ENCODE measurements at regions of chr19 and their contacts with region 1.

Region 1: DNA sequence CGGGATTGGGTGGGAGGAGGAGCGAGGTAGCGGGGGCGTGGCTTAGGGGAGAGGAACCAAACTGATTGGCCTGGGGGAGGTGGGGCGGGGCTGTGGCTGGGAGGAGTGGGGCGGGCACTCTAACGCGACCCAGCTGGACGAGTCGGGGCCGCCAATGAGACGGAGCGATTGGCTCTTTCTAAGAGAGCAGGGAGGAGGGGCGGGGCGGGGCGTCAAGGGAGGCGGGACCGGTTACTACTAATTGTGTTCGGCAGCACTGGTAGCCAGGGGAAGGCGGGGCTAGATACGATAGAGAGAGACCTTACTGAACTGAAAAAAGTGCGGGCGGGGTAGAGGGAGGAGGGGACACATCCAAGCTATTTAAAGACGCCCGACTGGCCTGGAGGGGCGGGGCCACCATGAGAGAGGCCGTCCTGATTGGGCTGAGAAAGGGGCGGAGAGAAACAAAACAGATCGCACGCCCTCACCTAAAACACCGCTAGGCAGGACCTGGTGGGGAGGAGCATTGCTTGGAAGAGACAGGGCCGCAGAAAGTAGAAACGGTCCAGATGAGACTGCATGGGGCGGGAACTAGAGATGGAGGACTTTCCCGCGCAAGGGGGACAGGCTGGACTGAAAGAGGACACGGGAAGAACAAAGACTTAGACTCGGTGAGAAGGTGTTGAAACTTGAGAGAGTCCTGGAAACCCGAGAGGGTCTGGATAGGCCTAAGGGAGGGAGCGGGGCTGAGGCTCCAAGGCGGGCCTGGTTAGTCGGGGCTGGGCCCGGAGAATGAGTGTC is at the start of gene KCNC3:
- DNase-seq: peak; percentile 98
- H3K4me3 Mint-ChIP-seq: peak within 1 kb of the TSS; percentile 82
- H3K27ac Mint-ChIP-seq: peak within 1 kb of the TSS; percentile 83
- H3K4me1 Mint-ChIP-seq: peaks cover 65% of the 10 kb centered on the region
- H3K27me3 Mint-ChIP-seq: peaks cover 45% of the 10 kb centered on the region
- total RNA-seq, gene KCNC3: 2.0 to 2.4 TPM

Region 2: DNA sequence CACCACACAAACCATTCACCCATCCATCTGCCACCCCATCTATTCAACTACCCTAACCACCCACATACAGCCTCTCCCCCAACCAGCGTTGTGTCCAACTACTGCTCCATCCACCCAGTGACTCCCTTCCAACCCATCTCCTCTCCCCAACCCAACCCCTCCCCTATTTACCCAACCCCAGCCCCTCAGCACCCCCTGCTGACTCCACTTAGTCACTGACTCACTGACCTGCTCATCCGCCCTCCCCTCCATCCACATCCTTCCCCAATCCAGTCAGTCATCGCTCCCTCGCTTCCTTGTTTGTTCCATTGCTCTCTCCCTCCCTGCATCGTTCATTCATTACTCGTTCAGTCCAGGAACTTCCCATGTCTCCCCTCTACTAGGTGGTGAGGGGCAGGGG is 39.3 kb before region 1 on chr19:
- CTCF ChIA-PET with region 1: no interaction called
- intact Hi-C with region 1: no loop called
- DNase-seq: no peak
- H3K4me3 Mint-ChIP-seq: no peak overlapping the region
- H3K27ac Mint-ChIP-seq: no peak overlapping the region
- H3K4me1 Mint-ChIP-seq: no peaks in the 10 kb centered on the region
- H3K27me3 Mint-ChIP-seq: peaks cover 38% of the 10 kb centered on the region

Region 3: GRCh38 chr19:50341091-50341564 is 11.8 kb after region 1 on chr19:
- CTCF ChIA-PET with region 1: interaction called, 4 read pairs
- intact Hi-C with region 1: loop called (anchors 2 kb)
- DNase-seq: no peak
- H3K4me3 Mint-ChIP-seq: no peak overlapping the region
- H3K27ac Mint-ChIP-seq: no peak overlapping the region
- H3K4me1 Mint-ChIP-seq: peaks cover 12% of the 10 kb centered on the region
- H3K27me3 Mint-ChIP-seq: no peaks in the 10 kb centered on the region

Region 4: DNA sequence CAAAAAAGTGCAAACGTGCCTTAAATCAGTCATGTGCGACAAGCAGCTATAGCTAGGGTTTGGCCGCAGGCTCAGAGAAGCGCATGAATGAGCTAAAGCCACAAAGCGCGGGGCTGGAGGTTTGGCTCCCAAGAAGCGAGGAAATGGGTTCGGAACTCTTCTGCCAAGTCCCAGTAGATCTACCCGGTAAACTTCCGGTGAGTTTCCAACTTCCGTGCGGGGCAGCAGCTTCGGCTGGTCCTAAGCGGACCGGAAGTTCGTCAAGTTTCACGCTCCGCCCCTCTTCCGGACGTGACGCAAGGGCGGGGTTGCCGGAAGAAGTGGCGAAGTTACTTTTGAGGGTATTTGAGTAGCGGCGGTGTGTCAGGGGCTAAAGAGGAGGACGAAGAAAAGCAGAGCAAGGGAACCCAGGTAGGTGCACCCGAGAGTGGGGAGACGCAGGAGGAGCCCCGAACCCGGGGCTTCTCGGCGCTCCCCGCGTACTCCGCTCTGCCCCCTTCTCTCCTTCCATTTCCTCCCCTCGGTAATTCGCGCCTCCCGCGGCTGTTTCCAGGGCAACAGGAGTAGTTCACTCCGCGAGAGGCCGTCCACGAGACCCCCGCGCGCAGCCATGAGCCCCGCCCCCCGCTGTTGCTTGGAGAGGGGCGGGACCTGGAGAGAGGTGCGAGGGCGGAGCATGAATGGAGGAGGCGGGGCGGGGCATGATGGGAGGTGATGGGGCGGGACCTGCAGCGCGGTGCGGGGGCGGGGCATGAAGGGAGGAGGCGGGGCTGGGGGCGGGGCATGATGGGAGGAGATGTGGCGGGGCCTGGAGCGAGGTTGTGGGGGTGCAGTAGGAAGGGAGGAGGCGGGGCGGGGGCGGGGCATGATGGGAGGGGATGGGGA is 47.1 kb after region 1 on chr19 and contains the start of gene NR1H2:
- CTCF ChIA-PET with region 1: no interaction called
- intact Hi-C with region 1: loop called (anchors 1 kb)
- DNase-seq: peak; percentile 96
- H3K4me3 Mint-ChIP-seq: peak within 1 kb of the TSS; percentile 100
- H3K27ac Mint-ChIP-seq: peak within 1 kb of the TSS; percentile 100
- H3K4me1 Mint-ChIP-seq: peaks cover 19% of the 10 kb centered on the region
- H3K27me3 Mint-ChIP-seq: no peaks in the 10 kb centered on the region
- total RNA-seq, gene NR1H2: 47.2 to 49.3 TPM

Region 5: DNA sequence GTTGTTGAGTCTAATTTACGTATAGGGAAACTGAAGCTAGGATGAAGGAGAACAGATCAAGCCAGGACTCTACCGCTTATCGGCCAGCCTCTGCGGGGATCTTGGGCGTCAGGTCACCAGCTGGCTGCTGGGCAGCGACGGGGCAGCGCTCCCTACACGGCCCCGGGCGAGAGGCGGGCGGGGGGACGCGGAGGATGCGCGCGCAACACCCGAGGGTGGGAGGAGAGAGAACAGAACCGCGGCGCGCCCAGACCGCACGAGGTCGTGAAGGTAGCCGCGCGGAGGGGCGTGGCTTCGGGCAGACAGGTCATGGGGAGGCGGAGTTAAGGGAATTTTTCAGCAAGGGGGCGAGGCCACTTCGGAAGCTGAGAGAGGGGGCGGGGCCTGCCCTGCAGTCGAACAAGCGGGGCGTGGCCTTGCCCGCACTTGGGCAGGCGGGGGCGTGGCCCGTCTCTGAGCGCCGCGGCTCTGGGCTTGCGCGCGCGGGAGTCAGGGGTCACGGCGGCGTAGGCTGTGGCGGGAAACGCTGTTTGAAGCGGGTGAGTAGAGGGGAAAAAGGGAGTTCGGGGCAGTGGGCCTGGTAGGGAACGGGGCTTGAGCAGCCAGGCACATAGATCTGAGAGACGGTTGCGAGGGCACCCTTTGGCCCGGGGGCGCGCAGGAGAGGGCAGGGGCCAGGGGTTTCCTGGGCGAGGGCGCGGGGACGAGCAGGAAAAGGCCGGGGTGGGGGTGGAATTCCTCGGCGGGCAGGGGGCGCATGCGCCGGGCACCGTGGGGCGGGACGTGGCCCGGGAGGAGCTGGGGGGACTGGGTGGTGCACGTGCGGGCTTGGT is 54.7 kb after region 1 on chr19 and contains the start of gene POLD1:
- CTCF ChIA-PET with region 1: no interaction called
- intact Hi-C with region 1: loop called (anchors 1 kb)
- DNase-seq: peak; percentile 99
- H3K4me3 Mint-ChIP-seq: peak within 1 kb of the TSS; percentile 98
- H3K27ac Mint-ChIP-seq: peak within 1 kb of the TSS; percentile 95
- H3K4me1 Mint-ChIP-seq: peaks cover 36% of the 10 kb centered on the region
- H3K27me3 Mint-ChIP-seq: no peaks in the 10 kb centered on the region
- total RNA-seq, gene POLD1: 221 to 224 TPM

Region 6: DNA sequence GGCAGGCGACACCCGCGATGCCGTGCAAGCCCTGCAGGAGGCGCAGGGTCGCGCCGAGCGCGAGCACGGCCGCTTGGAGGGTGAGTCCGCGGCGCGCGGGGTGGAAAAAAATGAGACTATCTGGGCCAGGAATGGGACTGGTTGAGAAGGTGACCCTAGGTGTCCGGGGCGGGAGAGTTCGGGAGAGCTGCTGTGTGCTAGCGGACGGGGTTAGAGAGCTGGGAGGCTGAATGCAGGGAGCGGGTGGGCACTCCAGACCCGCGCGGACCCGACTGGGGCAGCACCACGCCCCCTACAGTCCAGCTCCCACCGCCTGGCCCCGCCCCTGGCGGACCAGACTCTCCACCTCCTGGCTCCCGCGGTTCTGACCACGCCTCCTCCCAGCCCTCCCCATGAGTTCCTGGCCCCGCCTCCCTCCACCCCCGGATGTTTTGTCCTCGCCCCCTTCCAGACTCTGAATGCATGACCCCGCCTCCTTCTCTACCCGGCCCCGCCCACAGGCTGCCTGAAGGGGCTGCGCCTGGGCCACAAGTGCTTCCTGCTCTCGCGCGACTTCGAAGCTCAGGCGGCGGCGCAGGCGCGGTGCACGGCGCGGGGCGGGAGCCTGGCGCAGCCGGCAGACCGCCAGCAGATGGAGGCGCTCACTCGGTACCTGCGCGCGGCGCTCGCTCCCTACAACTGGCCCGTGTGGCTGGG is 395.3 kb after region 1 on chr19:
- CTCF ChIA-PET with region 1: no interaction called
- intact Hi-C with region 1: loop called (anchors 10 kb)
- DNase-seq: peak; percentile 99
- H3K4me3 Mint-ChIP-seq: peak overlapping the region; percentile 74
- H3K27ac Mint-ChIP-seq: no peak overlapping the region
- H3K4me1 Mint-ChIP-seq: peaks cover 27% of the 10 kb centered on the region
- H3K27me3 Mint-ChIP-seq: peaks cover 51% of the 10 kb centered on the region

Measured in activated naive CD4-positive, alpha-beta T cell treated with anti-CD3 and anti-CD28 coated beads for 36 hours (primary cell).